ENCODE measurements at regions of chr18 and their contacts with region 1.

Region 1: GRCh38 chr18:9808295-9809241 is 77.2 kb upstream of the TXNDC2 start:
- DNase-seq: peak in 1 of 3 donors; percentile 74
- ATAC-seq: peak; percentile 60 to 66
- H3K4me3 ChIP-seq: no peak overlapping the region
- H3K27ac ChIP-seq: peak overlapping the region; percentile 80
- H3K4me1 ChIP-seq: peaks cover 2% of the 10 kb centered on the region
- H3K27me3 ChIP-seq: no peaks in the 10 kb centered on the region

Region 2: GRCh38 chr18:9684881-9685614 is 123.5 kb before region 1 on chr18:
- intact Hi-C with region 1: no loop called
- DNase-seq: peak; percentile 68 to 80 (median 78)
- ATAC-seq: peak; percentile 87 to 90
- H3K4me3 ChIP-seq: no peak overlapping the region
- H3K27ac ChIP-seq: peak overlapping the region; percentile 85
- H3K4me1 ChIP-seq: peaks cover 2% of the 10 kb centered on the region
- H3K27me3 ChIP-seq: no peaks in the 10 kb centered on the region

Region 3: GRCh38 chr18:9913526-9914333 is 105.2 kb after region 1 on chr18 and contains the start of gene VAPA:
- intact Hi-C with region 1: loop called in 1 of 4 experiments (anchors 10 kb)
- DNase-seq: peak; percentile 96 to 98 (median 98)
- ATAC-seq: peak; percentile 97 to 98
- H3K4me3 ChIP-seq: peak within 1 kb of the TSS; percentile 90
- H3K27ac ChIP-seq: peak within 1 kb of the TSS; percentile 94
- H3K4me1 ChIP-seq: peaks cover under 1% of the 10 kb centered on the region
- H3K27me3 ChIP-seq: no peaks in the 10 kb centered on the region
- total RNA-seq, gene VAPA: 172 to 206 (median 204) TPM

Region 4: GRCh38 chr18:9933865-9934264 is 125.3 kb after region 1 on chr18:
- intact Hi-C with region 1: loop called in 1 of 4 experiments (anchors 10 kb)
- DNase-seq: no peak
- ATAC-seq: no peak
- H3K4me3 ChIP-seq: no peak overlapping the region
- H3K27ac ChIP-seq: no peak overlapping the region
- H3K4me1 ChIP-seq: no peaks in the 10 kb centered on the region
- H3K27me3 ChIP-seq: no peaks in the 10 kb centered on the region

Region 5: GRCh38 chr18:9951022-9951859 is 142.7 kb after region 1 on chr18:
- intact Hi-C with region 1: loop called in 2 of 4 experiments (anchors 10 kb)
- DNase-seq: no peak
- ATAC-seq: peak; percentile 73 to 79
- H3K4me3 ChIP-seq: no peak overlapping the region
- H3K27ac ChIP-seq: no peak overlapping the region
- H3K4me1 ChIP-seq: no peaks in the 10 kb centered on the region
- H3K27me3 ChIP-seq: no peaks in the 10 kb centered on the region